Transverse colon (tissue), 4 donors: ENCODE measurements at regions of chr10 and their contacts with region 1.

Region 1: DNA sequence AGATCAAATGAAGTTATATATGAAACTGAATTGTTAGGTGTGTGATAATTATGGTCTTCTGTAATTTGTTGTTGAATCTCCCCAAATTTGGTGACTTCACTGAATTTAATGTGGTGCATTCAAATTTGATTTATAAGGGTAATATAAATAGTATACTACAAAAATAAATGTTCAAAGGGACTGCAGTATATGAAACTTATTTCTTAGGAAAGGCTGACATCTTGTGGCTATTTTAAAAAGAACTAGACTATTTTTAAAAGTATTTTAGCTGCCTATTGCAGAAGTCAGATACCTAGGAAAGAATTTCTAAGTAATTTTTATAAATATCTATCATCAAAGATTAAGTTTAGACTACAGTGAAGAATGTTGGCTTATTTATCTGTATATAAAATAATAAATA is 36.6 kb downstream of the ATRNL1 start:
- DNase-seq: no peak
- H3K4me3 ChIP-seq: no peak overlapping the region
- H3K27ac ChIP-seq: no peak overlapping the region
- H3K4me1 ChIP-seq: no peaks in the 10 kb centered on the region
- H3K27me3 ChIP-seq: no peaks in the 10 kb centered on the region
- CTCF ChIP-seq: peak; percentile 31 to 40 (median 36)
- EP300 ChIP-seq: no peak
- POLR2A ChIP-seq: no peak

Region 2: DNA sequence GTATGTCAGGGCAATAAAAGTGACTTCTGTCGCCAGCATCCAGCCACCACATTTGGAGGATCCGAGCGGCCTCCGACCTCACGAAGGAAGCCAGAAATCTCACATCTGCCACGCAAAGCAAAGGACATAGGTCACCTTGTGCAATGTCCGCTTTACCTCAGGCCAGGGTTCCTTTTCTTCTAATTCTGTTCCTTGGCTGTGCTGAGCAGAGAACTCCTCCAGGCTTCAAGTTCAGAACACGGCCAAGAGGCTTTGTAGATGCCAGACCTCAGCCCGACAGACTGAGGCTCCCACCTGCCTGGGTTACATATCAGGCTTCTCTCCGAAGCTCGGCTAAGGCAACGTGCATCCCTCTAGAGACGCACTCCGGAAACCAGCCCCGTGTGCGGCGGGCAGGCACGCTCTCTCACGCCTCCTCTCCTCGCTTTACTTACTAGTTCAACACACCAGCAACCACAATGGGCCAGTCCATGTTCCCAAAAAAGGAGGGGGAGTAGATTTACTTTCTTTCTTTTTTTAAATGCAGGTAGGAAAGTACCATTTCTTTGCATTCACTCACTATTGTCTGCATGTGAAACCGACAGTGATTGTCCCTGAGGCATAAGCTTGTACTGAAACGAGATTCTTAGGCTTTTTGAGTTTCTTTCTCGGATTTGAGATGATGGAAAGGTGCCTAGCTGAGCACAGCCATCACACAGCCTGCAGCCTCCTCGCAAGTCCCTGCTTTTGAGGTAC is 603.1 kb before region 1 on chr10:
- in situ Hi-C with region 1: loop called in 1 of 4 experiments (anchors 25 kb)
- intact Hi-C with region 1: no loop called
- DNase-seq: peak; percentile 91
- H3K4me3 ChIP-seq: peak overlapping the region; percentile 20 to 47 (median 30)
- H3K27ac ChIP-seq: peak overlapping the region; percentile 84 to 90 (median 88)
- H3K4me1 ChIP-seq: peaks cover 9 to 59% (median 45%) of the 10 kb centered on the region in 4 donors
- H3K27me3 ChIP-seq: no peaks in the 10 kb centered on the region
- CTCF ChIP-seq: no peak
- EP300 ChIP-seq: no peak
- POLR2A ChIP-seq: peak; percentile 97

Region 3: DNA sequence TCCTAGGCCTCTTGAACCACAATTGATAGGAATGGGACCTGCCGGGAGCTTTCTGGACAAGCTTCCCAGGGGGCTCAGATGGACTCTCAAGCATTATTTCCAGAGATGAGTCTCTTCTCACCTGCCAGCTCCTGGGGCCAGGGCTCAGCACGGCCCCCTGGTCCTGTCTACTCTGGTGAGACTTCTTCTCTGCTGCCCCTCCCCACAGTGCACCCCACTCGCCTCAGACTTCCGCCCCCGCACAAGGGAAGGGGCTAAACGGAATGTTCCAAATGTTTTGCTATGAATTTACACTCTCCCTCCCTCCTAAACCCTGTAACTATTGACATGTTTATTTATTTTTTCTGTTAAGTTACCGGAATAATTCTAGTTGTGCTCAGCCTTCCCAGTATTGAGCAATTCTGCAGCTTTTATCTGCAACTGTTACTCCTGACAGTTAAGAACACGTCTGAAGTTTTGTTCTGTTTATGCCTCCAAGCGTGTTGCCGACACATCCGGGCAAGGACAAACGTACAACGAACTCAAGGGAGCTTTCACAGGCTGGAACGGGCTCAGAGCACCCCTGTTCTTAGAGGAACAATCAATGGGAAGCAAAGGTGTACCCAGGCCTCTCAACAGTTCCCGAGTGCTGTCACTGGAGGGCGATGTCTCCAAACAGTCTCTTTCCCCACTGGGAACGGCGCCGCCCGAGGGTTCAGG is 253.0 kb before region 1 on chr10:
- in situ Hi-C with region 1: loop called (anchors 10 to 25 kb)
- intact Hi-C with region 1: loop called (anchors 2 kb)
- DNase-seq: peak; percentile 62
- H3K4me3 ChIP-seq: no peak overlapping the region
- H3K27ac ChIP-seq: no peak overlapping the region
- H3K4me1 ChIP-seq: peaks cover 0 to 12% (median 2%) of the 10 kb centered on the region in 4 donors
- H3K27me3 ChIP-seq: no peaks in the 10 kb centered on the region
- CTCF ChIP-seq: peak; percentile 55 to 67 (median 59)
- EP300 ChIP-seq: no peak
- POLR2A ChIP-seq: no peak